PC-9 (cell line): ENCODE measurements at regions of chr3 and their contacts with region 1.

Region 1: DNA sequence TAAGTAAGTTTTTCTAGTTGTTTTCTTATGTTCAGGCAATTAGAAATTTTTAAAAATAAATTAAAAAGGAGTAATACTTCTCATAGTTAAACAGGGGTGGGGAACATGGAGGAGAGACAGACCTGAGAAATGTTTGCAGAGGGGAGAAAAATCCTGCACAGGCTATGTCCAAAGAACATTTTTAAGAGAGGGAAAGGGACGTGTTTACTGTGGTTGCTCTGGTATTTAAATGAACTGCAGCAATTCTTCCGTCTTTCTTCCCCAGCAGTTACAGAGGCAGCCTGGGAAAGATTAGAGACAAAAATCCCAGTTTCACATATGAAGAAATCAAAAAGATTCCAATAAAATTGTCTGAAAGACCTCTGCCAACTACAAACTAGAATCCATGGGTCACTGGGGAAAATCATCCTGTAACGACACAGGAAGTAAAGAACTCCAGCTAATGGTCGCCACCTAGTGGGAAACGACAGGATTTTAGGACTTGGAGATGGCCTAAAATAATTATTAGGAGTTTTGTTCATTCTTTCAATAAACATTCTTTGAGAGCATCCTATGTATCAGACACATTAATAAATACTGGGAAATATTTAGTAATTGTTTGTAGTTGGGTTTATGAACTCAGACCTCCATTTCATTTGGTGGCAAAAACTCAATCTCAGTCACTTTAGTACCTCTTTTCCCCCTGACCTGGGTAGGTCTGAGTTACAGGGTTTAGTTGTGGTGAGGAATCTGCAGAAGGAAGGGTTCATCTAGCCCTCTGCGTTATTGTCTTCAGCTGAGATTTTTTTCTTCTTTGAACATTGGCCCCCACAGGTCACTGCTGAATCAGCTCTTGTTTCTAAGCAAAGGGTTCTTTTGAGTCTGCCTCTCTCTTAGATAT is 69.9 kb upstream of the GOLIM4 start:
- DNase-seq: peak; percentile 36 to 46
- H3K4me3 ChIP-seq: no peak overlapping the region
- H3K27ac ChIP-seq: no peak overlapping the region
- H3K4me1 ChIP-seq: no peaks in the 10 kb centered on the region
- H3K27me3 ChIP-seq: no peaks in the 10 kb centered on the region
- CTCF ChIP-seq: peak; percentile 87

Region 2: GRCh38 chr3:167929968-167930367 is 235.7 kb before region 1 on chr3:
- CTCF ChIA-PET with region 1: no interaction called
- POLR2A ChIA-PET with region 1: no interaction called
- intact Hi-C with region 1: loop called (anchors 10 kb)
- DNase-seq: no peak
- H3K4me3 ChIP-seq: no peak overlapping the region
- H3K27ac ChIP-seq: no peak overlapping the region
- H3K4me1 ChIP-seq: no peaks in the 10 kb centered on the region
- H3K27me3 ChIP-seq: no peaks in the 10 kb centered on the region
- CTCF ChIP-seq: no peak

Region 3: DNA sequence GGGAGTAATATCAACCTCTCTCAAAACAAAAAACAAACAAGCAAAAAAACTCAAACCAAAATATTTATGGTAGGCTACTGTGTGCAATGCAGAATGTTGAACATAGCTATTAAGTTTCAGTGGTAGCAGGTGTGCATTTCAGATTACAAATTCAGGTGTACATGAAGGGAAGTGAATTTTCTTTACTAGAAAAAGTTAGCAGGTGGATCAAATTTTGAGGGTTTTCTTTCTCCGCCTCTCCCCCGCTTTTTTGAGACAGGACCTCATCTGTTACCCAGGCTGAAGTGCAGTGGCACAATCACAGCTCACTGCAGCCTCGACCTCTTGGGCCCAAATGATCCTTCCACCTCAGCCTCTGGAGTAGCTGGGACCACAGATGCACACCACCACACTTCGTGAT is 39.8 kb after region 1 on chr3:
- CTCF ChIA-PET with region 1: no interaction called
- POLR2A ChIA-PET with region 1: no interaction called
- intact Hi-C with region 1: no loop called
- DNase-seq: no peak
- H3K4me3 ChIP-seq: no peak overlapping the region
- H3K27ac ChIP-seq: no peak overlapping the region
- H3K4me1 ChIP-seq: no peaks in the 10 kb centered on the region
- H3K27me3 ChIP-seq: no peaks in the 10 kb centered on the region
- CTCF ChIP-seq: no peak

Region 4: DNA sequence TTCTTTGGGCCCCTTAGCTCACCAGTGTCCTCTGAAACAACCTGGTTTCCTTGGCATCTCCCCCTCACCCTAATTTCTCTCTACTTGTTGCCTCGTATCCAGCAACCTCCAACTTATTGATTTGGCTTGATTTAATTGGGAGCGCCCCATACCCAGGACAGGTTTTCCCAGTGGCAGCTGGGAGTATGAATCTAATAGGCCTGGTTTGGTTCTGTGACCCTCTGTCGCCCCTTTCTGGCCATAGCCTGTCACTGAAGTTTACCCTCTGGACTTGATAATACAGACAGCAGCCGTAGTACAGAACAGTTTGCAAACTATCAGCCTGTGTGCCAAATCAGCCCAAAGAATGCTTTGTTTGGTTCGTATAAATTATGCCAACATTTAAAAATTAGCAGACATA is 455.2 kb after region 1 on chr3:
- CTCF ChIA-PET with region 1: no interaction called
- POLR2A ChIA-PET with region 1: no interaction called
- intact Hi-C with region 1: no loop called
- DNase-seq: peak in 1 of 2 experiments; percentile 18
- H3K4me3 ChIP-seq: no peak overlapping the region
- H3K27ac ChIP-seq: no peak overlapping the region
- H3K4me1 ChIP-seq: no peaks in the 10 kb centered on the region
- H3K27me3 ChIP-seq: no peaks in the 10 kb centered on the region
- CTCF ChIP-seq: peak; percentile 68